Endothelial cell of umbilical vein (primary cell): ENCODE measurements at regions of chr20 and their contacts with region 1.

Region 1: GRCh38 chr20:347640-348484 is 951 bp downstream of the NRSN2 start:
- DNase-seq: peak; percentile 89
- H3K4me3 ChIP-seq: peak overlapping the region; percentile 53 to 77 (median 54)
- H3K27ac ChIP-seq: peak overlapping the region; percentile 51
- H3K4me1 ChIP-seq: peaks cover 9% of the 10 kb centered on the region
- H3K27me3 ChIP-seq: no peaks in the 10 kb centered on the region
- CTCF ChIP-seq: no peak
- POLR2A ChIP-seq: peak; percentile 75

Region 2: GRCh38 chr20:208942-209566 is 138.8 kb before region 1 on chr20:
- CTCF ChIA-PET with region 1: no interaction called
- POLR2A ChIA-PET with region 1: no interaction called
- dilution Hi-C with region 1: no loop called
- intact Hi-C with region 1: loop called (anchors 5 kb)
- DNase-seq: peak; percentile 66
- H3K4me3 ChIP-seq: no peak overlapping the region
- H3K27ac ChIP-seq: no peak overlapping the region
- H3K4me1 ChIP-seq: no peaks in the 10 kb centered on the region
- H3K27me3 ChIP-seq: peaks cover 11 to 22% of the 10 kb centered on the region in 2 experiments
- CTCF ChIP-seq: peak; percentile 31 to 50
- POLR2A ChIP-seq: no peak

Region 3: DNA sequence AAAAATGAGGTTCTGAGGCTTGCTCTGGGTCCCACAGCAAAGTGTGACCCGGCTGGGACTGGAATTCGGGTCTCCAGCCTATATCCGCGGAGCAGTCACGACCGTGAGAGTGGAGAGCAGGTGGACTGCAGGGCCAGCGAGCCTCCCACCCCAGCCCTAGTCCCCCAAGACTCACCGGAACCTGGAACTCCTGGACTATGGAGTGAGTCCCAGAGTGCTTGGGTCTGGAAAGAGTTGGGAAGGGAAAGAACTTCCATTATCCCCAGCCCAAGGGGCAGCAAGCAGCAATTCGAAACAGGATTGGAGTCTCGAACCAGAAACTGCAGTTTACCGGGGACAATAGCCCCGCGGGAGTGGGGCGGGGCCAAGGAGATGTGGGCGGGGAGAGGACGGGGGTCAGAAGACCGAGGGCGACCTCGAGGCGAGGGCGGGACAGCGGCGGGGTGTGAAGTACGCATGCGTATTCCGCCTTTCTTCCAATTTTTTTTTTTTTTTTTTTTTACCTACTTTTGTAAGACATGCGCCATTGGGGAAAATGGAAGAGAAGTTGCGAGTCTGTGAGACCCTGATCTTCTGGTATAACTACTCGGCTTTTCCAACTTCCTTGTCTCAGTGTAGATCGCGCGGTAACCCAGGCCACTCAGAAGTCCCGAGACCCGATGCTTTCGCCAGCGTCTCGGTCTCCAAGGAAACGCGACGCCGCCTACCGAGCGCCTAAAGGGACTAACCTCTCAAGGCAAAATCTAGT is 57.6 kb before region 1 on chr20 and contains the start of gene C20orf96:
- CTCF ChIA-PET with region 1: no interaction called
- POLR2A ChIA-PET with region 1: no interaction called
- dilution Hi-C with region 1: no loop called
- intact Hi-C with region 1: no loop called
- DNase-seq: peak; percentile 94
- H3K4me3 ChIP-seq: peak within 1 kb of the TSS; percentile 82 to 98 (median 87)
- H3K27ac ChIP-seq: peak within 1 kb of the TSS; percentile 54
- H3K4me1 ChIP-seq: peaks cover 27% of the 10 kb centered on the region
- H3K27me3 ChIP-seq: no peaks in the 10 kb centered on the region
- CTCF ChIP-seq: peak; percentile 22 to 62
- POLR2A ChIP-seq: peak; percentile 70
- total RNA-seq, gene C20orf96: 17.0 and 20.0 TPM in 2 replicates

Region 4: GRCh38 chr20:462199-462991 is 114.5 kb after region 1 on chr20 and contains the start of gene TBC1D20:
- CTCF ChIA-PET with region 1: no interaction called
- POLR2A ChIA-PET with region 1: no interaction called
- dilution Hi-C with region 1: no loop called
- intact Hi-C with region 1: loop called (anchors 1 kb)
- DNase-seq: peak; percentile 85
- H3K4me3 ChIP-seq: peak within 1 kb of the TSS; percentile 55 to 70 (median 66)
- H3K27ac ChIP-seq: peak within 1 kb of the TSS; percentile 48
- H3K4me1 ChIP-seq: peaks cover 28% of the 10 kb centered on the region
- H3K27me3 ChIP-seq: no peaks in the 10 kb centered on the region
- CTCF ChIP-seq: peak in 1 of 2 donors; percentile 16
- POLR2A ChIP-seq: peak; percentile 75
- total RNA-seq, gene TBC1D20: 30.6 and 34.3 TPM in 2 replicates

Region 5: GRCh38 chr20:543369-544152 is 195.7 kb after region 1 on chr20 and contains the start of gene CSNK2A1:
- CTCF ChIA-PET with region 1: no interaction called
- POLR2A ChIA-PET with region 1: no interaction called
- dilution Hi-C with region 1: no loop called
- intact Hi-C with region 1: loop called (anchors 5 kb)
- DNase-seq: peak; percentile 97
- H3K4me3 ChIP-seq: peak within 1 kb of the TSS; percentile 76 to 100 (median 93)
- H3K27ac ChIP-seq: peak within 1 kb of the TSS; percentile 89
- H3K4me1 ChIP-seq: peaks cover 28% of the 10 kb centered on the region
- H3K27me3 ChIP-seq: peaks cover 6 to 8% of the 10 kb centered on the region in 2 experiments
- CTCF ChIP-seq: no peak
- POLR2A ChIP-seq: peak; percentile 86
- total RNA-seq, gene CSNK2A1: 134 and 142 TPM in 2 replicates